ENCODE measurements at regions of chr1 and their contacts with region 1.

Region 1: DNA sequence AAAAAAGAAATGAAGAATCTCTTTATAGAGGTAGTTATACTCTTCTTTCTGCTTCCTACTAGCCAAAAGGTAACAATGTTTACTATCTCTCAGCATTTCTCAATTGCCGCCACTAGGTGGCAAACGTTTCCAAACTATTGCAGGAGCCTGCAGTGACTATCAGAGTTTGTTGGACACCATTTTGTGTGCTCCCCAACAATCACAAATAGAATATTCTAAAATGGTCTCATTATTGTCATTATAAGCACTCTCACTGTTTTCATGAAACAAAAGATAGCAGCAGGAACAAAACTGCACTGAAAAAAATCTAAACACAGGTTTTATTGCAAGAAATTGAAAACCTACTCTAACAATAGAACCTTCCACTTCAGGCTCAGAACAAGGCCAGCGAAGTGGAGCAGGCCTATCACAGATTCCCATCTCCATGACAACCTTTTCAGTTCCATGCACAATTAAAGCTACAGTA is 83.9 kb upstream of the PLPPR4 start:
- DNase-seq: no peak
- H3K4me3 ChIP-seq: no peak overlapping the region
- H3K27ac ChIP-seq: peak overlapping the region in 2 of 8 donors; percentile 21 to 45
- H3K4me1 ChIP-seq: no peaks in the 10 kb centered on the region
- H3K27me3 ChIP-seq: no peaks in the 10 kb centered on the region
- CTCF ChIP-seq: peak; percentile 15 to 81 (median 68)
- POLR2A ChIP-seq: no peak

Region 2: DNA sequence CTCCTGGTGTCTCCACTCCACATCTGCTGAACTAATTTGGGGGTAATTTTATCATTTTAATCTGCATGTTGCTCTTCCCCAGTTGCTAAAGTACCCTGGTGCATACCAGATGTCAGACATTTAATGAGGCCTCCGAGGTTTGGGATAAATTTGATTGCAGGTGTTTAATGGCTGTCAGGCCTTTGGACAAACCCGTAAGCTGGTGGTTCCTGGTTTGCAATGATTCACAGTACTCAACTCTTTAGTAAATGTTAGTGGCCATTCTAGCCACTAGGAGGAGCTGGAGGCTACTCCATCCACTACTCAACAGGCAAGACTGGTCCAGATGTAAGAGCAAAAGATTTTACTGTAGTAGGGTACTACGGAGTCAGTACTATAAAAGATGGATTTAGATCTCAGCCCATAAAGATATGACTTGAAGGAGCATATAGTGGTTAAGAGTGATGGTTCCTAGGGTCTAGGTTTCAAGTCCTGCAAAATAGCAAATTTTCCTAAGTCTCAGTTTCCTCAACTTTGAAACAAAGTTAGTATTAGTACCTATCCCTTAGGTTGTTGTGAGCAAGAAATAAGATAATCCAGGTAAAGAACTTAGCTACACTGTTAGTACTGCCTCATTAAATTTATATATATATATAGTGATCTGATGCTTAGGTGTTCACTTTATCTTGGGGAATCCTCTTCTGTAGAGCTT is 386.0 kb before region 1 on chr1:
- intact Hi-C with region 1: loop called (anchors 10 kb)
- DNase-seq: no peak
- H3K4me3 ChIP-seq: no peak overlapping the region
- H3K27ac ChIP-seq: no peak overlapping the region
- H3K4me1 ChIP-seq: no peaks in the 10 kb centered on the region
- H3K27me3 ChIP-seq: no peaks in the 10 kb centered on the region
- CTCF ChIP-seq: peak in 10 of 11 experiments; percentile 36 to 74 (median 62)
- POLR2A ChIP-seq: no peak

Region 3: GRCh38 chr1:99469550-99469971 is 289.2 kb after region 1 on chr1:
- intact Hi-C with region 1: no loop called
- DNase-seq: no peak
- H3K4me3 ChIP-seq: no peak overlapping the region
- H3K27ac ChIP-seq: no peak overlapping the region
- H3K4me1 ChIP-seq: no peaks in the 10 kb centered on the region
- H3K27me3 ChIP-seq: no peaks in the 10 kb centered on the region
- CTCF ChIP-seq: no peak
- POLR2A ChIP-seq: no peak

Region 4: DNA sequence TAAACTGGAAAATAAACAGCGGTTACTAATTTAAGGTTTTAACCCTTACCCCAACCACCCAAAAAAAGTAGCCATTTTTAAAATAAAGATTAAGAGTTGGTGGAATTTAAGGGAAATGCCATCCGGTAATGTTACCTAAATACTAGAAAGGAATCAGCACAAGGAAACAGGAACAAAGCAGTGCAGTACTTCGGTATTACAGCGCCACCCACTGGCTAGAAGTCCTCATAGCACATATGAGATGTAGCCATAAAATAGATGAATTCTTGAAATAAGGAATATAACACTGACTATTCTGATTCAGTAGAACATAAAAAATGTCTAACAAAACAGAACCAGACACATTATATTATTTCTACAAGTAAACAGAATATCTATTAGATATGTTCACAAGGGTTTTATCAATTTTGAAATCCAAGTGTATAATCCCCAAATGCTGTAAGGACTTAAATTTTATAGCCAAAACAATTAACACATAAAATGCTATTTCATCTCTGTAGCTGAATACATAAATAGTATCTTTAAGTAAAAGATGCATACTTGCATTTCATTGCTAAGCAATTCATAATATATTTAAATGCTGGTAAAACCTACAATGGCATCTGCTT is 527.3 kb after region 1 on chr1:
- intact Hi-C with region 1: loop called (anchors 5 kb)
- DNase-seq: peak; percentile 77
- H3K4me3 ChIP-seq: no peak overlapping the region
- H3K27ac ChIP-seq: no peak overlapping the region
- H3K4me1 ChIP-seq: peaks cover 0 to 11% (median 6%) of the 10 kb centered on the region in 6 donors
- H3K27me3 ChIP-seq: no peaks in the 10 kb centered on the region
- CTCF ChIP-seq: peak; percentile 44 to 84 (median 75)
- POLR2A ChIP-seq: no peak

Measured in spleen (tissue), 13 donors.